Activated T-helper 1 cell treated with anti-CD3 and anti-CD28 coated beads, Interleukin-12 subunit alpha, Interleukin-12 subunit beta, Interleukin-2, Interleukin-4 antibody, amounts not matched to agents 30 ng/mL and 10 ng/mL and 1 ng/mL, durations not matched to agents 14 hours and 24 hours and 36 hours (primary cell): ENCODE measurements at regions of chr3 and their contacts with region 1.

Region 1: GRCh38 chr3:112357930-112358780 is 25.2 kb downstream of the CD200 start:
- DNase-seq: peak; percentile 24
- H3K4me3 Mint-ChIP-seq: peak overlapping the region; percentile 75
- H3K27ac Mint-ChIP-seq: peak overlapping the region; percentile 93
- H3K4me1 Mint-ChIP-seq: peaks cover 36% of the 10 kb centered on the region
- H3K27me3 Mint-ChIP-seq: no peaks in the 10 kb centered on the region

Region 2: DNA sequence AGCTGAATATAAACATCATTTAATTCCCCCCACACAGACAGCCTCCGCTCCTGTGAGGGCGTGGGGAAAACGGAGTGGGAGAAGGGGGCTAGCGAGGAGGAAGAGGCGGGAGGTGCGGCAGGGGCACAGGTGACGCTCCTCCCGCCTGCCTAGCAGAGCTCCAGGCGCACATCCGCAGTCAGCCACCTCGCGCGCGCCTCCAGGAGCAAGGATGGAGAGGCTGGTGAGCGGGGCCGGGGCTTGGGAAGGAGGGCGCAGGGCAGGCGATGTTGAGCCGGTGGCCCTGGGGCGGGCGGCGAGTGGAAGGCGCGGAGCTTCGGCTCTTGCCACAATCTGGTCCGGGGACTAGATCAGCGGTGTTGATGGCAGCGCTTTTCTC is 25.2 kb before region 1 on chr3 and contains the start of gene CD200:
- intact Hi-C with region 1: loop called (anchors 1 kb)
- DNase-seq: peak; percentile 44
- H3K4me3 Mint-ChIP-seq: peak within 1 kb of the TSS; percentile 97
- H3K27ac Mint-ChIP-seq: peak within 1 kb of the TSS; percentile 84
- H3K4me1 Mint-ChIP-seq: peaks cover 41% of the 10 kb centered on the region
- H3K27me3 Mint-ChIP-seq: peaks cover 1% of the 10 kb centered on the region
- total RNA-seq, gene CD200: 141 TPM in 2 replicates